Right cardiac atrium (tissue), 5 donors: ENCODE measurements at regions of chr22 and their contacts with region 1.

Region 1: DNA sequence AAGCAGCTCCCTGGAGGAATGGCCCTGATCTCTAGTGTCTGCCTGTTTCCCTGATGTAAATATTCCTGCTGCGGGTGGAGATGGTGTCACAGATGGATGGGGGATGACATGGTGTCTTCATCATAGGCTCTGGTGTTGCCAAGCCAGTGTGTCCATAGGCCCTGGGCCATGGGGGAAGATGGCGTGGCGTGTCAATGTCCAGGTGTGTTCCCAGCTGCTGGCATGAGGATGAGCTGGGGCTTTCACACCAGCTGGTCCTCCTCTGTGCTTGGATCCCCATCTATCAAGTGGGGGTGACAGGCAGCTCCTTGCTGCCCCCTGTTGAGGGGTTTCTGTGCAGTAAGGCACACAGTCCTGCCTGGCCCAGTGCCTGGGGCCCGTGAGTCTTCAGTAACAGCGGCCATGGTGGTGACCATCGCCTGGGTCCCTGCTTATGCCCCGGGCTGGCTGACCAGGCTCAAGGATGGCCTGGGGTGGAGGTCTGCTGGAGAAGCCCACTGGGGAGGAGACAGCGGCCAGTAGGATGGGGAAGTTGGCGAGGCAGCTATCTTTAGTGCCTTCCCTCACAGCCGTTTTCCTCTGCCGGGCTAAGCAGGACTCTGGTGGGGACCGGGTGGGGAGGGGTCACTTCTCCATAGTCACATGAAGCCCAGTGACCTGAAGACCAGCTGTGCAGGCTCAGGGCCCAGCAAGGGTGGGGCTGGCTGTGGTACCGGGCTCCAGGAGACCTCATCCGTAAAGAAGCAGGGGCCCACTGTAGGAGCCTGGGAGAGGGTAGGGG is 12.7 kb downstream of the RPL3 start:
- DNase-seq: peak in 2 of 3 donors; percentile 75 to 79
- ATAC-seq: no peak
- H3K4me3 ChIP-seq: no peak overlapping the region
- H3K27ac ChIP-seq: no peak overlapping the region
- H3K4me1 ChIP-seq: peaks cover 5% of the 10 kb centered on the region
- H3K27me3 ChIP-seq: no peaks in the 10 kb centered on the region

Region 2: DNA sequence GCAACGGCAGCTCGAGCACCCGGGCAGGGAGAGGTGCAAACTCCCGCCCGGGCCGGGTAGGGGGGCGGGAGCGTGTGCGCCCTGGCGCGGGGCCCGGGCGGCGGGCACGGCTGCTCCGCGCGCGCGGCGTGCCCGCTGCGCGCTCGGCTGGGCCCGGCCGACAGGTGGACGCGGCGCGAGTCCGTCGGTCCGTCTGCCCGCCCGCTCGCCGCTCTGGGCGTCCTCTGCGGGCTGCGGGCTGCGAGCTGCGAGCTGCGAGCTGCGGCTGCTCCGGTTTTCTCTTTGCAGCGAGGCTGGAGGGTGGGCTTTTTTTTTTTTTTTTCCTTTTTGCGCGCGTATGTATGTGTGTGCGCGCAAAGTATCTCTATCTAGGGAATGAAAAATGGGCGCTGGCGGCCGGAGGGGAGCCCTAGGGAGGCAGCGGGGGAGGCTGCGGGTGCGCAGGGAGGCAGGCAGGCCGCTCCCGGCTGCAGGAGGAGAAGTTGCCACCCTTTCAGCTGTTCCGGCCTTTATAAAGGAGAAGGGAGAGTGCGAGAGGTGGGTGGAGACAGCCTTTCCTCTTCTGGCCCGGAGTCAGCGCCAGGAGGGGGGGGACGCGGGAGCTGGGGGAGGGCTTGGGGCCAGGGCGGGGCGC is 62.2 kb before region 1 on chr22 and contains the start of gene PDGFB:
- intact Hi-C with region 1: loop called (anchors 5 to 10 kb)
- DNase-seq: peak; percentile 59 to 84 (median 76)
- ATAC-seq: peak; percentile 62 to 63
- H3K4me3 ChIP-seq: peak within 1 kb of the TSS; percentile 88
- H3K27ac ChIP-seq: peak within 1 kb of the TSS; percentile 79
- H3K4me1 ChIP-seq: peaks cover 6% of the 10 kb centered on the region
- H3K27me3 ChIP-seq: no peaks in the 10 kb centered on the region
- total RNA-seq, gene PDGFB: 9.3 to 82.1 (median 20.6) TPM